SK-N-SH (cell line): ENCODE measurements at regions of chr3 and their contacts with region 1.

Region 1: DNA sequence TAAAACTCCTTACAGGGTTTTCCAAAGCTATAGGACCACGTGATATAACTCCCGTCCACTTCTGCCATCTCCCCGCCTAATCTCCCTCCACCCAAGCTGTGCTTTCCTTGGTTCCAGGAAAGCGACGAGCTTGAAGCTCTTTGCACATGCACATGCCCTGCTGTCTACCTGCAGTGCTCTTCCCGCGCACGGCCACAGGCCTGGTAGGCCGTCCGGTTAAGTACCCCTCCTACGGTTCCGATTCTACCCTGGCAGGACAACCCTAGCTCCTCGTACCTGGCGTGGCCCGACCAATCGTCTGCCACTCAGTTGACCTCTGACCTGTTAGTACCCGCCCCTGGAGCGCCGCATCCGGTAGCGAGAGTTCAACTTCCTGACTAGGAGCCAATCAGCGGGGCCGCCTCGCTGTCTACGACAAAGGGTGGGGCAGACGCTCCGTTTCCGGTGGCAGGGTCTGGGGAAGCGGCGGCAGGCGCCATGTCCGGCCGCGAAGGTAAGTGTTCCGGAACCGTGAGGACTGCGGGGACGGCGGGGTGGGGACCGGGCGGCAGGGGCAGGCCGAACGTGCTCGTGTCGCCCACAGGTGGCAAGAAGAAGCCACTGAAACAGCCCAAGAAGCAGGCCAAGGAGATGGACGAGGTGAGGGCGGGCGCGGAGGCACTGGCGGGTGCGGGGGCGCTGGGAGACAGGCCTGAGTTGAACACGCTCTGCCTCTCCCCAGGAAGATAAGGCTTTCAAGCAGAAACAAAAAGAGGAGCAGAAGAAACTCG is at the starts of genes CCDC51 and TMA7:
- DNase-seq: peak; percentile 98
- H3K4me3 ChIP-seq: peak within 1 kb of the TSS; percentile 79 to 86
- H3K27ac ChIP-seq: peak within 1 kb of the TSS; percentile 64 to 86
- H3K4me1 ChIP-seq: peaks cover 8 to 20% of the 10 kb centered on the region in 2 experiments
- H3K27me3 ChIP-seq: no peaks in the 10 kb centered on the region
- CTCF ChIP-seq: no peak
- EP300 ChIP-seq: 0 out of 4 replicates have a peak, but pooled peaks of 1 of the 2 experiments have one; percentile 20
- RAD21 ChIP-seq: no peak
- polyA plus RNA-seq, gene CCDC51: 24.2 and 29.6 TPM in 2 replicates
- polyA plus RNA-seq, gene TMA7: 393 and 438 TPM in 2 replicates

Region 2: GRCh38 chr3:48240711-48241491 is 199.1 kb before region 1 on chr3 and contains the start of gene ZNF589:
- CTCF ChIA-PET with region 1: interaction called, 120 read pairs
- POLR2A ChIA-PET with region 1: interaction called, 4 read pairs
- DNase-seq: peak; percentile 94
- H3K4me3 ChIP-seq: peak within 1 kb of the TSS; percentile 69
- H3K27ac ChIP-seq: peak within 1 kb of the TSS; percentile 61 to 78
- H3K4me1 ChIP-seq: no peaks in the 10 kb centered on the region; a peak in 1 of 4 replicates
- H3K27me3 ChIP-seq: no peaks in the 10 kb centered on the region
- CTCF ChIP-seq: peak; percentile 29
- EP300 ChIP-seq: no peak
- RAD21 ChIP-seq: no peak
- polyA plus RNA-seq, gene ZNF589: 4.4 and 8.0 TPM in 2 replicates

Region 3: GRCh38 chr3:48285132-48285531 is 154.9 kb before region 1 on chr3:
- CTCF ChIA-PET with region 1: interaction called, 186 read pairs
- POLR2A ChIA-PET with region 1: no interaction called
- DNase-seq: no peak
- H3K4me3 ChIP-seq: no peak overlapping the region
- H3K27ac ChIP-seq: peak overlapping the region in 1 of 2 experiments; percentile 18; a peak in 1 of 4 replicates
- H3K4me1 ChIP-seq: no peaks in the 10 kb centered on the region
- H3K27me3 ChIP-seq: no peaks in the 10 kb centered on the region
- CTCF ChIP-seq: no peak
- EP300 ChIP-seq: no peak
- RAD21 ChIP-seq: no peak

Region 4: DNA sequence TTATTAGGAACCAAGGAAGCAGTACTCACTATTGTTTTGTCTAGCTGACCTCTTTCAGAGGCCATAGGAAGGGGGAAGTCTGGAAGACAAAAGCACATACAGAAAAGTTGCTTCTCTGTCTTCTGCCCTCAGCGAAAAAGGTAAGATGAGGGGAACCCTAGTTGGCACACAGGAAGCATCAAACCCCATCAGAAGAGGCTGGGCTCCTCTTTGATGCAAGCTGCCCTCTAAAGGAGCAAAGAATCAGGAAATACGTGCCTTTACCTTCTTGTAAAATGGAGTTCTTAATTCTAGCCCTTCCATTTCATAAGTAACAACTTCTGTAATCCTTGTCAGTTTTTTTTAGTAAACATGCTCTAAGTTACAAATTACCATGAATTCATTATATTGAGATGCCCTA is 119.0 kb before region 1 on chr3:
- CTCF ChIA-PET with region 1: interaction called, 10 read pairs
- POLR2A ChIA-PET with region 1: no interaction called
- DNase-seq: no peak
- H3K4me3 ChIP-seq: no peak overlapping the region
- H3K27ac ChIP-seq: no peak overlapping the region
- H3K4me1 ChIP-seq: no peaks in the 10 kb centered on the region
- H3K27me3 ChIP-seq: no peaks in the 10 kb centered on the region
- CTCF ChIP-seq: no peak
- EP300 ChIP-seq: no peak
- RAD21 ChIP-seq: no peak

Region 5: GRCh38 chr3:48388966-48389365 is 51.0 kb before region 1 on chr3:
- CTCF ChIA-PET with region 1: interaction called, 40 read pairs
- POLR2A ChIA-PET with region 1: no interaction called
- DNase-seq: no peak
- H3K4me3 ChIP-seq: no peak overlapping the region
- H3K27ac ChIP-seq: no peak overlapping the region
- H3K4me1 ChIP-seq: no peaks in the 10 kb centered on the region
- H3K27me3 ChIP-seq: no peaks in the 10 kb centered on the region; the same call in 1 of the 2 replicates
- CTCF ChIP-seq: no peak
- EP300 ChIP-seq: no peak
- RAD21 ChIP-seq: no peak

Region 6: DNA sequence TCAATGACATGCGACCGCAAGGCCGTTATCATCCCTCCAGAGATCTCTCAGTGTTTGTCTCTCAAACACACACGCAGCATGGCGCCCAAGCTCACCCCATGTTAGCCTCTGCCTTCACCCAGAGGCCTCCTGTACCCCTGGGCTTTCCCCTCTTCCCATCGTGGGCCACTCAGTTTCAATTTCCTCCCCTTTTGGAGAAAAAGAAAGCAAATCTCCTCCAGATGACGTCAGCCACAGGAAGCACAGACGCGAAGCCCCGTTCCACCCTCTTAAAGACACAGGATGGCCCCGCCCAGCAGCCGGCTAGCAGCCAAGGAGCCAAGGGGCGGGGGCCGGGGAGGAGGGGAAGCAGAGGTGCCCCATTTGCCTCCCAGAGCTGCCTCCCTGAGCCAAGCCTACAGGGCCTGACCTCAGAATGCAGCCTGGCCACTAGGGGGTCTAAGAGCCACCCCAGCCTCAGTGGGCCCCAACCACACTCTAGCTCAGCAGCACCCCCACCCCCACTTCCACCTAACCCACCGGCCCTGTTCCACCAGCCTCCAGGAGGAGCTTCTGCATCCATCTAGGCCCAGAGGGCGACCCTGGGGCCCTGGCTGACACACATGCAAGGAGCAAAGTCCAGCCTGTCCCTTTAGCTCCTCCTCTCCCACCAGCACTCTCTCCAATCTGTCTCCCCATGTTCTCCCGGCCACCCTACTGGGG is 33.1 kb after region 1 on chr3:
- CTCF ChIA-PET with region 1: interaction called, 11 read pairs
- POLR2A ChIA-PET with region 1: interaction called, 3 read pairs
- DNase-seq: peak; percentile 82
- H3K4me3 ChIP-seq: peak overlapping the region; percentile 61 to 65
- H3K27ac ChIP-seq: peak overlapping the region; percentile 80 to 87
- H3K4me1 ChIP-seq: peaks cover 0 to 28% of the 10 kb centered on the region in 2 experiments; a peak in 1 of 4 replicates
- H3K27me3 ChIP-seq: no peaks in the 10 kb centered on the region
- CTCF ChIP-seq: peak; percentile 59
- EP300 ChIP-seq: no peak
- RAD21 ChIP-seq: peak; percentile 11; the same call in 1 of the 2 replicates

Region 7: DNA sequence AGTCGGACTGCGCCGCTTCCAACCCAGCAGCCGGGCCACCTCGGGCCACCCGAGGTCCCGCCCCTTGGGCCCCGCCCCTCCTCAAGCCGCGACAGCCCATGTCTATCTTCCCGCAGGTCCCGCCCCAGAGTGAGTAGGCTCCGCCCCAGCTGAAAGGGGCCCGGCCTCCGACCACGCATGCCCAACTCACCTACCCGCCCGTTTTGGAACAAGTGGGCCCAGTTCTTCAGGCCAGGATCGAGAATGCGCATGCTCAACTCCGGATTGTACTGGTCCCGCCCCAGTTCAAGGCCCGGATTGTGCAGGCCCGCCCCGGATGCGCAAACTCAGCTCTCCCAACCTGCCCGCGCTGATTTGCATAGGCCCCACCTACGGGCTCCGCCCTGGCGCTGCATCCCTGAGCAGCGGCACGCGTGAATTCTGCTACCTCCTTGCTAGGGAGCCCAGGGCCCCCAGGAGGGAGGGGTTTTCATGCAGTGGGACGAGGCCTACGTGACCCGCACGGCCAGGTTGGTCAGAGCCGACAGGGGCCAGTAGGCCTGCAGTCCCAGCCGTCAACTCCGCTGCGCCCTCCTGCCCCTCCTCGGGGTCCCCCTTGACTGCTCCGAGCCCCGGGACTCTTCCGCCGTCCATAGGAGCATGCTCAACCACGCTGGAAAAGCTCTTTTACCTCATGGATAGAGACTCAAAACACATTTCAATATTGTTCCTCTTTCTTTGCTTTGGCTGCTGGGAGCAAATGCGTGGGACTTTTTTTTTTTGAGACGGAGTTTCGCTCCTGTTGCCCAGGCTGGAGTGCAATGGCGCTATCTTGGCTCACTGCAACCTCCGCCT is 117.0 kb after region 1 on chr3 and contains the start of gene PFKFB4:
- CTCF ChIA-PET with region 1: interaction called, 17 read pairs
- POLR2A ChIA-PET with region 1: interaction called, 3 read pairs
- DNase-seq: peak; percentile 99
- H3K4me3 ChIP-seq: peak within 1 kb of the TSS; percentile 57 to 77
- H3K27ac ChIP-seq: peak within 1 kb of the TSS; percentile 48 to 49
- H3K4me1 ChIP-seq: peaks cover 29 to 61% of the 10 kb centered on the region in 2 experiments; a peak in 3 of 4 replicates
- H3K27me3 ChIP-seq: no peaks in the 10 kb centered on the region
- CTCF ChIP-seq: no peak
- EP300 ChIP-seq: no peak
- RAD21 ChIP-seq: no peak
- polyA plus RNA-seq, gene PFKFB4: 5.7 and 6.7 TPM in 2 replicates